Lower leg skin (tissue), 4 donors: ENCODE measurements at regions of chr3 and their contacts with region 1.

Region 1: DNA sequence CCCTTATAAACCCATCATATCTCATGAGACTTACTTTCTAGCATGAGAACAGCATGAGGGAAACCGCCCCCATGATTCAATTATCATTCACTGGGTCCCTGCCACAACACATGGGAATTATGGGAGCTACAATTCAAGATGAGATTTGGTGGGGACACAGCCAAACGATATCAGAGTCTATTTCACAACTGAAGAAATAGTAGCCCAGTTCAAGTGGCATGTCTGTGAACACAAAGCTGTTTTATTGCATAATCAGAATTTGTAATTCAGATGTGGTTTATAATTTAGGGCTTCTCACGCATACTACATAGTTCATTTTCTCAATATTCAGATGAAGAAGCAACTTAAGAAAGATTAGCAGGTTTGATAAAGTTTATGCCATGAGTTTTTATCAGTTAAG is 1188.0 kb upstream of the ALCAM start:
- DNase-seq: no peak
- H3K4me3 ChIP-seq: no peak overlapping the region
- CTCF ChIP-seq: no peak
- POLR2A ChIP-seq: no peak

Region 2: GRCh38 chr3:103372031-103372430 is 806.6 kb before region 1 on chr3:
- intact Hi-C with region 1: no loop called
- DNase-seq: no peak
- H3K4me3 ChIP-seq: no peak overlapping the region
- CTCF ChIP-seq: no peak
- POLR2A ChIP-seq: no peak

Region 3: DNA sequence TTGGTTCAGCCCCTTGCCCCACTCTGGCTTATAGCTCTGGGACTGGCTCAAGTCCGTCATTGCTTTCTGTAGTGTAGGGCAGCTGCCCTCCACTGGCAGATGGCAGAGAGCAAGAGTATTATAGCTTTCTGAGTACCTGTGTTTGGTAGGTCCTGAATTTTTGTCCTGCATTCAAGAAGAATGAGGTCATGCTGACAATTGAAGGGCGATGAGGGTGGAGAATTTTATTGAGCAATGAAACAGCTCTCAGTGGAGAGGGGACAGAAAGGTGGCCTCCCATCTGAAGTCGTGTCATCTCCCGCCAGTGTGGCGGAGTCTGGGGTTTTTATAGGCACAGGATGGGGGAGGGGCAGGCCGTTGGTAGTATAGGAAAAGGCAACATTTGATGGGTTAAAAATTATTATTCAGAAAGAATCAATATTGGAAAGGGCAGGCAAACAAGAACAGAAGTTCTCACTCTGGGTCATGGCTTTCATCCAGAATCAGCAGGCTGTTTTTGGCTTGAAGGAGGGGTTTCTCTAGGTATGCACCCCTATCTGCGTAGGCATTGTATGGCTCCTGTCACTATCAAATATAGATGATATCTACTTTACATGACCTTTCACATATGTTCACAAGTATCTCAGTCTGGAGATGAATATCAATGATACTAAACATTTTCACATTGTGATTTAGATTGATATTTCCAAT is 51.7 kb before region 1 on chr3:
- intact Hi-C with region 1: no loop called
- DNase-seq: no peak
- H3K4me3 ChIP-seq: no peak overlapping the region
- CTCF ChIP-seq: no peak
- POLR2A ChIP-seq: no peak

Region 4: DNA sequence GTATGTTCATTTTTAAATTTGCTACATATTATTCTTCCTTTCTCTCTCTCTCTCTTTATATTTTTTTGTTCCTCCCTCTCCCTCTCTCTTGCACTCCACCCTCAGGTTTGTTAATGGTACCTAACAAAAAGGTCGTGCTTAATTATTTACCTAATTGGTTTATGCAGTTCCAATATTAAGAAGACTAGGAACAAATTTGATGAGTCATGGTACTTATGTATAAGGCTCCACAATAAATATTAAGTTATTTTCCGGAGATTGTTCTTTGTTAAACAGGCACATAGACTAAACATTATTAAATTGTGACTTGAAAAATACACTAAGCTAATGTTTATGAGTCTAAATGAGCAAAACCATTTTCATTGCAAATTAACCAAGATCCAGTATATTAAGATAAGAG is 12.8 kb before region 1 on chr3:
- intact Hi-C with region 1: no loop called
- DNase-seq: no peak
- H3K4me3 ChIP-seq: no peak overlapping the region
- CTCF ChIP-seq: no peak
- POLR2A ChIP-seq: no peak

Region 5: GRCh38 chr3:104206936-104207335 is 28.3 kb after region 1 on chr3:
- intact Hi-C with region 1: loop called (anchors 1 kb)
- DNase-seq: no peak
- H3K4me3 ChIP-seq: no peak overlapping the region
- CTCF ChIP-seq: no peak
- POLR2A ChIP-seq: no peak